Body of pancreas (tissue), 4 donors: ENCODE measurements at regions of chr19 and their contacts with region 1.

Region 1: GRCh38 chr19:40139533-40140287 is 49.0 kb upstream of the ZNF780A start:
- DNase-seq: peak in 2 of 4 donors; percentile 23 to 34
- ATAC-seq: no peak
- H3K4me3 ChIP-seq: no peak overlapping the region
- H3K27ac ChIP-seq: no peak overlapping the region
- H3K4me1 ChIP-seq: no peaks in the 10 kb centered on the region
- H3K27me3 ChIP-seq: no peaks in the 10 kb centered on the region
- CTCF ChIP-seq: peak; percentile 56 to 88 (median 82)
- POLR2A ChIP-seq: no peak

Region 2: GRCh38 chr19:39906820-39907611 is 232.7 kb before region 1 on chr19:
- intact Hi-C with region 1: no loop called
- DNase-seq: no peak
- ATAC-seq: no peak
- H3K4me3 ChIP-seq: no peak overlapping the region
- H3K27ac ChIP-seq: no peak overlapping the region
- H3K4me1 ChIP-seq: no peaks in the 10 kb centered on the region
- H3K27me3 ChIP-seq: no peaks in the 10 kb centered on the region
- CTCF ChIP-seq: no peak
- POLR2A ChIP-seq: no peak

Region 3: DNA sequence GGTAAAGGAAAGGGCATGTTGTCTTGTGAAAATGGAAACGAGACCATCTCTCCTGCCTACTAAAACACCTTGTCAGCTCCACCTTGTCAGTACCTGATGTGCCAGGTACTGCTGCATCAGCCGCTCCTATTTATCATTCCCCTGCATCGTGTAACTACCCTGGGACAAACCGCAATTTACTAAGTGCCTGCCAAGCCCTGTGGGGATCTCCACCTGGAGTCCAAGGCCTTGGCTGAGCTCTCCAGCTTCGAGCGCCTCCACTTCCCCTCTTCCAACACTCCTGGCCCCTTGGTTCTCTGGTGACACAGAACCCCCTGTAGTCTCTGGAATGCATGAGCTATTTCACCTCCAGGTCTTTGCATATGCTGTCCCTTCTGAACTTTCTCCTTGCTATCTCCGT is 112.7 kb after region 1 on chr19:
- intact Hi-C with region 1: no loop called
- DNase-seq: peak in 3 of 4 donors; percentile 22 to 38 (median 25)
- ATAC-seq: peak; percentile 49
- H3K4me3 ChIP-seq: no peak overlapping the region
- H3K27ac ChIP-seq: peak overlapping the region in 3 of 4 donors; percentile 3 to 67 (median 42)
- H3K4me1 ChIP-seq: peaks cover 34% of the 10 kb centered on the region
- H3K27me3 ChIP-seq: no peaks in the 10 kb centered on the region
- CTCF ChIP-seq: no peak
- POLR2A ChIP-seq: no peak

Region 4: GRCh38 chr19:40639638-40639982 is 499.9 kb after region 1 on chr19:
- intact Hi-C with region 1: loop called (anchors 5 kb)
- DNase-seq: no peak
- ATAC-seq: no peak
- H3K4me3 ChIP-seq: no peak overlapping the region
- H3K27ac ChIP-seq: no peak overlapping the region
- H3K4me1 ChIP-seq: no peaks in the 10 kb centered on the region
- H3K27me3 ChIP-seq: no peaks in the 10 kb centered on the region
- CTCF ChIP-seq: no peak
- POLR2A ChIP-seq: no peak